ENCODE measurements at regions of chr11 and their contacts with region 1.

Region 1: DNA sequence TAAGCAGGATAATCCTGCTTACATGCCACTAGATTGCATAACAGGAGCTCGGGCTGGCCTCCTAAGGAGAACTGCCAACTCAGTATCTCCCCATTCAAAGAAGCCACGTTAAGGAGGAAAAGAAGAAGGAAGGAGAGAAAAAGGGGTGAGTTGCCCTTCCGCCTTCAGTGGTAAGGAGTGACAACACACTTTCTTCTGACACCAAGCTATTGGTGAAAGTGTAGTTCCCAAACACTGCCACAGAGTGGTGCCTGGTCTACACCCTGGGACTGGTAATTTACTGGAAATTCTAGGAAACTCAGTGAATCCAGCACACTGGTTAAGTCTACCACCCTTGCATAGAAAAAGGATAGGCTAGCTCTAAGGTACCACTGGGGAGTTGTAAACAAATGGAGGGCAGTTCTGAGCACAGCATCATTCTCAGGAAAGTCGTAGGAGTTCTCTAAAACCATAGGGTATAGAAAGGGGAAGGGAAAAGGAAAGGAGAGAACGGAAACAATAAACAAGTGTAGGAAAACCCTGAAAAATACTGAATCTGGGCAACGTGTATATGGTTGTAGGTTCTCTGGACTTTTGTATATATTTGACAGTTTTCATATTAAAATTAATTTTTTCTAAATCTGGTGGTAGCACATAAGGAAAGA is 58.2 kb downstream of the RRAS2 start:
- DNase-seq: peak; percentile 25
- H3K4me3 Mint-ChIP-seq: no peak overlapping the region
- H3K27ac Mint-ChIP-seq: no peak overlapping the region
- H3K4me1 Mint-ChIP-seq: peaks cover 17% of the 10 kb centered on the region
- H3K27me3 Mint-ChIP-seq: no peaks in the 10 kb centered on the region

Region 2: GRCh38 chr11:14373931-14374646 is 73.3 kb after region 1 on chr11:
- intact Hi-C with region 1: no loop called
- DNase-seq: no peak
- H3K4me3 Mint-ChIP-seq: no peak overlapping the region
- H3K27ac Mint-ChIP-seq: peak overlapping the region; percentile 54
- H3K4me1 Mint-ChIP-seq: peaks cover 60% of the 10 kb centered on the region
- H3K27me3 Mint-ChIP-seq: peaks cover 6% of the 10 kb centered on the region

Region 3: GRCh38 chr11:14418803-14419417 is 118.1 kb after region 1 on chr11:
- intact Hi-C with region 1: loop called (anchors 1 kb)
- DNase-seq: no peak
- H3K4me3 Mint-ChIP-seq: no peak overlapping the region
- H3K27ac Mint-ChIP-seq: no peak overlapping the region
- H3K4me1 Mint-ChIP-seq: peaks cover 49% of the 10 kb centered on the region
- H3K27me3 Mint-ChIP-seq: no peaks in the 10 kb centered on the region

Measured in activated T-helper 1 cell treated with anti-CD3 and anti-CD28 coated beads, Interleukin-12 subunit alpha, Interleukin-12 subunit beta, Interleukin-2, Interleukin-4 antibody, amounts not matched to agents 30 ng/mL and 10 ng/mL and 1 ng/mL, durations not matched to agents 14 hours and 24 hours and 36 hours (primary cell).